GM10248 (cell line): ENCODE measurements at regions of chr2 and their contacts with region 1.

Region 1: GRCh38 chr2:73963385-73964120 is 21.2 kb upstream of the TET3 start:
- DNase-seq: peak; percentile 55
- CTCF ChIP-seq: no peak

Region 2: DNA sequence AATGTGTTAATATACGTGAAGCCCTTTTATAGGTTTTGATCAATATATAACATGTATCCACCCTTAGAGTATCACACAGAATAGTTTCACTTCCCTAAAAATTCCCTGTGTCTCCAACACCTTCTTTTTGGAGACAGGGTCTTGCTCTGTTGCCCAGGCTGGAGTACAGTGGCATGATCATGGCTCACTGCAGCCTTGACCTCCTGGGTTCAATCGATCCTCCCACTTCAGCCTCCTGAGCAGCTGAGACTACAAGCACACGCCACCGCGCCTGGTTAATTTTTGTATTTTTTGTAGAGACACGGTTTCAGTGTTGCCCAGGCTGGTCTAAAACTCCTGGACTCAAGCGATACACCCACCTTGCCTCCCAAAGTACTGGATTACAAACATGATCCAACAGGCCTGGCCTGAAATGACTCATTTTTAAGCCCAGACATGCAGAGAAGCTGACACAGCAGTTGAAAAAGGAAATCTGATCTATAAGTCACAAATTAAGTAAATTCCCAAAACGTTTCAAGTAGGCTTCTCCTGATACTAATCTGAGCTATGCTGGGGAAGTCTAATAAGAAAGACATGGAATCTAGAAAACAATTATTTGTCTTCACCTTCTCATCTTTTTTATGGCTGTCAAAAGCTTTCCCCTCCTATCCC is 186.6 kb before region 1 on chr2:
- CTCF ChIA-PET with region 1: no interaction called
- POLR2A ChIA-PET with region 1: no interaction called
- DNase-seq: no peak
- CTCF ChIP-seq: no peak

Region 3: DNA sequence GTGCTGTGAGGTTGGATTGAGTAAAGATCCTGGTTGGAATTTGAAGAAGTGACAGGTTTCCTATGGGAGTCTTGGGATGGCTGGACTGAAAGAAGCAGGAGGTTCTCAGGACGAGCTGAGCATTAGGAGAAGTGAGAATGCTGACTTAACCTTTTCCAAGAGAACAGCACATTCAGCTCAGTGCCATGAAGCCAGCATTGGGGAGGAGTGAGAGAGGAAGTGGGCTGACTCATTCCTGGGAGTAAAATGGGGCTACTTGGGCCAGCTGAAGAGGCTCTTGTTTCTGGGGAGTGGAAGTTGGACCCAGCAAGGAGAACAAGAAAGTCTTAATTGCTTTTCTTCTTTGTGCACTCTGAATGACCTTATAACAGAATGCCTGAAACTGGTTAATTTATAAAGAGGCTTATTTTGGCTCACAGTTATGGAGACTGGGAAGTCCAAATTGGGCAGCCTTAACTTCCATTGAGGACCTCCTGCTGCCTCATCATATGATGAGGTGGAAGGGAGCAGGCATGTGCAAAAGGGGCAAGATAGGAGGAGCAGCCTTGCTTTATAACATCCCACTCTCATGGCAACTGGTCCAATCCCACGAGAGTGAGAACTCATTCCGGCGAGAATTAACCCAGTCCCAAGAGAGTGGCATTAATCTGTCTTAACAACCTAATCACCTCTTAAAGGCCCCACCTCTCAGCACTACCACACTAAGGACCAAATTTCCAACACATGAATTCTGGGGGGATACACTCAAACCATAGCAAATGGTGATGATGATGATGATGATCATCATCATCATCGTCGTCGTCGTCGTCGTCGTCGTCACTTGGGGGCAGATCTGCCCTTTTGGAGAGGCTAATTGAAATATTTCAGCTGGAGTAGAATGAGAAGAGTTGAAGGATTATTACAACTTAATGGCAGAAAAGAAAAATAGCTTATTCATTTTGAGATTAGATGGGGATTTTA is 10.8 kb before region 1 on chr2:
- CTCF ChIA-PET with region 1: interaction called, 14 read pairs
- POLR2A ChIA-PET with region 1: interaction called, 7 read pairs
- DNase-seq: no peak
- CTCF ChIP-seq: no peak

Region 4: DNA sequence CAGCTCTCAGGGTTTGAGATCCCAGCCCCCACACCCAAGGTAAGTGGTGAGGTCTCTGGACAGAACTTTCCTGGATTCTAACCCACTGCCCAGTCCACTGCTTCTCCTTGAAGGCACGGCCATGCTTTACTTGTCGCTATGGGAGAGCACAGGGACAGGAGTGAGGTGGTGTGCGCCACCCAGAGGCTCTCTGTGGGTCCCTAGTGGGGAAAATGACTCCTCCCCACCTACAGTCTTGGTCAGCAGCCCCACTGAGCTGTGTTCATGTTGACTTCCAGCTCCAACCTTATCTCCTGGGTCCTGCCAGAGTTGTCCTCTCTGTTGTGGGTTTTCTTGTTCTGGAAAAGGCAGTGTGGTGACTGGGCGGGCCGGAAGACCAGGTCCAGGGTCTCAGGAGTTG is 32.3 kb after region 1 on chr2:
- CTCF ChIA-PET with region 1: interaction called, 11 read pairs
- POLR2A ChIA-PET with region 1: no interaction called
- DNase-seq: no peak
- CTCF ChIP-seq: peak; percentile 32